ENCODE measurements at regions of chr1 and their contacts with region 1.

Region 1: GRCh38 chr1:67323087-67323486 is 15.4 kb downstream of the IL12RB2 start:
- DNase-seq: no peak
- ATAC-seq: no peak
- H3K4me3 ChIP-seq: no peak overlapping the region
- H3K27ac ChIP-seq: no peak overlapping the region
- H3K4me1 ChIP-seq: peaks cover 2% of the 10 kb centered on the region; the same call in 1 of the 2 replicates
- H3K27me3 ChIP-seq: peaks cover 6% of the 10 kb centered on the region
- CTCF ChIP-seq: no peak
- POLR2A ChIP-seq: no peak
- RAD21 ChIP-seq: no peak

Region 2: GRCh38 chr1:67274623-67275325 is 48.3 kb before region 1 on chr1:
- CTCF ChIA-PET with region 1: no interaction called
- POLR2A ChIA-PET with region 1: no interaction called
- dilution Hi-C with region 1: no loop called
- in situ Hi-C with region 1: no loop called
- intact Hi-C with region 1: loop called (anchors 1 kb)
- DNase-seq: no peak
- ATAC-seq: no peak
- H3K4me3 ChIP-seq: no peak overlapping the region
- H3K27ac ChIP-seq: no peak overlapping the region
- H3K4me1 ChIP-seq: no peaks in the 10 kb centered on the region
- H3K27me3 ChIP-seq: no peaks in the 10 kb centered on the region
- CTCF ChIP-seq: no peak
- POLR2A ChIP-seq: no peak
- RAD21 ChIP-seq: no peak

Region 3: GRCh38 chr1:68081775-68082283 is 758.7 kb after region 1 on chr1:
- CTCF ChIA-PET with region 1: no interaction called
- POLR2A ChIA-PET with region 1: no interaction called
- dilution Hi-C with region 1: no loop called
- in situ Hi-C with region 1: no loop called
- intact Hi-C with region 1: loop called (anchors 5 kb)
- DNase-seq: peak; percentile 28
- ATAC-seq: peak; percentile 40; the same call in 1 of the 2 replicates
- H3K4me3 ChIP-seq: no peak overlapping the region
- H3K27ac ChIP-seq: no peak overlapping the region
- H3K4me1 ChIP-seq: no peaks in the 10 kb centered on the region
- H3K27me3 ChIP-seq: no peaks in the 10 kb centered on the region
- CTCF ChIP-seq: no peak
- POLR2A ChIP-seq: no peak
- RAD21 ChIP-seq: no peak